Gastrocnemius medialis (tissue), 4 donors: ENCODE measurements at regions of chr19 and their contacts with region 1.

Region 1: DNA sequence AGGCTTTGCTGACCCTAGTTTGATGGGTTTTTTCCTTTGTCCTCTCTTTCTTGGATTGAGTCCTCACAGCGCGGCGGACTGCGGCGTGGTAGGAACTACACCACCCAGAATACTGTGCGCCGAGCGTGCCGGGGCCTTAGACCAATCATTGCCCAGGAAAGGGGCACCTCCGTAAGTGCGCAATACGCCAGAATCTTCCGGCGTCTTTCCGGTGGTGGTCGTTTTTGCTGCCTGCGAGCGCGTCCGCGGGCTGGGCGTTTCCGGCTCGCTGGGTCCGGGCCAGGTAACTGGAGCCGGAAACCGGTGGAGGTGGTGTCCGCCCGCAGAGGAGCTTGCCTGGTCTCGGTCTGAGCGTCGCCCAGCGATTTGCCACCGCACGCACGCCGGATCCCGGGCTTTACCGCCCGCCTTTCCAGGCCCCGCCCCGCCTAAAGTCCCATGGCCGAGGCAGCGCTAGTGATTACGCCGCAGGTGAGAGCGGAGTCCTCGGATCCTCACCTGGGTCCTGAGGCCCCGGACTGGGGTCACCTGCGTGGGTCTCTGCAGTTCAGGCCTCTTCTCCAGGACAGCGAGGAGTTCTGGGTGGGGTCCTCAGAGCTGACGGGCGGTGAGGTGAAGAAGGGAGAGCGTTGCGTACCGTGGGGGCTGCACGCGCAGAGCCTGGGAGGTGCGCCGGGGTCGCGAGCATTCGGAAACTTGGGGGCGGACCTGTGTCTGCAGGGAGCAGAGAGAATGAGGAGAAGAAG is at the start of gene ZNF549:
- DNase-seq: peak; percentile 91 to 94
- ATAC-seq: peak; percentile 99 to 100
- H3K4me3 ChIP-seq: peak within 1 kb of the TSS; percentile 70 to 91 (median 88)
- H3K27ac ChIP-seq: peak within 1 kb of the TSS; percentile 80 to 90 (median 87)
- H3K4me1 ChIP-seq: peaks cover 8 to 13% of the 10 kb centered on the region in 2 donors
- H3K27me3 ChIP-seq: no peaks in the 10 kb centered on the region
- CTCF ChIP-seq: no peak
- POLR2A ChIP-seq: no peak
- total RNA-seq, gene ZNF549: 1.7 to 3.4 (median 2.3) TPM

Region 2: GRCh38 chr19:57477191-57478008 is 49.9 kb before region 1 on chr19 and contains the start of gene ZNF772:
- in situ Hi-C with region 1: no loop called
- intact Hi-C with region 1: loop called (anchors 1 kb)
- DNase-seq: peak; percentile 89 to 91
- ATAC-seq: peak; percentile 100
- H3K4me3 ChIP-seq: peak within 1 kb of the TSS; percentile 79 to 84 (median 81)
- H3K27ac ChIP-seq: peak within 1 kb of the TSS; percentile 79 to 91 (median 86)
- H3K4me1 ChIP-seq: peaks cover 12 to 13% of the 10 kb centered on the region in 2 donors
- H3K27me3 ChIP-seq: no peaks in the 10 kb centered on the region
- CTCF ChIP-seq: peak; percentile 47 to 70 (median 61)
- POLR2A ChIP-seq: peak in 1 of 2 donors; percentile 20
- total RNA-seq, gene ZNF772: 8.3 to 26.7 (median 17.6) TPM

Region 3: DNA sequence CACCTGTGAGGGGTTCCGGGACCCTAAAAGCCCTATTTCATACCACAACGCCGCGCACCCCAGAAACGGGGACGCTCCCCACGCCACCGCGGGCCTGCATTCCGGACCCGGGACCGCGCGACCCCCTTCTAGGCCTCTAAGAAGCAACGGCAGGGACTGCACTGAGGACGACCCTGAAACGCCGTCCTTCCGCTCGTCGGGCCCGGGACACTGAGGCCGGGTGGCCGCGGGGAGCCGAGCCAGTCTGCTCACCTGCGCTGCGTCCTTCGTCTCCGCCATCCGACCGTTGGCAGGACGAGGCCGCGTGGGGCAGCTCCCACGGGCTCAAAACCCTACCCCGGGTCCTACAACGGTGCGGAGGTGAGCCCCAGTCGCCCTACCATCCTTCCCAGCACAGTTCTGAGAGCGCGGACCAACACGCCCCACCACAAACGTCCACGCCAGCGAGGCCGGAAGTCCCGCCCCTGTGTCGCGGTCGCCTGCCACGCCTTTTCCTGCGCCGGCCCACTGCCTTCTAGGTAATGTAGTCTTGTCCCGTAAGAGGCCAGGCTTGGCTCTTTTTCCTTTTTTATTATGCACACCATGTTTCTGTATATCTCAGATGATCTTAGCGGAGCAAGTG is 32.2 kb after region 1 on chr19 and contains the start of gene ZNF550:
- in situ Hi-C with region 1: no loop called
- intact Hi-C with region 1: loop called (anchors 2 kb)
- DNase-seq: peak; percentile 82 to 88
- ATAC-seq: peak; percentile 96 to 98
- H3K4me3 ChIP-seq: peak within 1 kb of the TSS; percentile 82 to 96 (median 90)
- H3K27ac ChIP-seq: peak within 1 kb of the TSS; percentile 69 to 86 (median 74)
- H3K4me1 ChIP-seq: peaks cover 16 to 26% of the 10 kb centered on the region in 2 donors
- H3K27me3 ChIP-seq: no peaks in the 10 kb centered on the region
- CTCF ChIP-seq: no peak
- POLR2A ChIP-seq: peak in 1 of 2 donors; percentile 51
- total RNA-seq, gene ZNF550: 0.87 to 9.1 (median 2.6) TPM

Region 4: DNA sequence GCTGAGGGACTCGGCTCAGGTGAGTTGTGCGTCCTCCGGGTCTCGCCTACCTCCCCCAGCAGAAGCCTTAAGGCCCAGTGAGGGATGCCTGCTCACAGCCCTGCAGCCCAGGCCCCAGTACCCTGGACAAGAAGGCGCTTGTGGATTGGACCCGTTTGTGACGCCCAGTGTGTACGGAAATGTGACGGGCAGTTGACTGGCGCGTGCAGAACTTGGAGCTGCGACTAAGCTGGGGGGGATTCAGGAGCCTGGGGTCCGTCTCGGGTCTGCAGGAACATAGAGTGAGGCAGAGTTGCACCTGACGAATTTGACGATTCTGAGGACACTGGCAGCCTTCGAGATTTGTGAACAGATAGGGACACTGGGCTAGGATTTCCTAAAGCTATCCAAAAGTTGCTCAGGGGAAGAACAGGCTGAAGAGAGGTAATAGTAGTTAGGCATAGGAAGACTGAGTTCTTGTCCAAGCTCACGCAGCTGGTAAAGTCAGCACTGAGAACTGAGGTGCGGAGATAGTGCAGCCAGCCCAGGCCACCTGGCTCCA is 155.0 kb after region 1 on chr19:
- in situ Hi-C with region 1: no loop called
- intact Hi-C with region 1: loop called (anchors 1 kb)
- DNase-seq: no peak
- ATAC-seq: peak; percentile 22 to 27
- H3K4me3 ChIP-seq: peak overlapping the region; percentile 74 to 99 (median 88)
- H3K27ac ChIP-seq: peak overlapping the region; percentile 55 to 82 (median 68)
- H3K4me1 ChIP-seq: peaks cover 10 to 14% of the 10 kb centered on the region in 2 donors
- H3K27me3 ChIP-seq: no peaks in the 10 kb centered on the region
- CTCF ChIP-seq: no peak
- POLR2A ChIP-seq: no peak

Region 5: DNA sequence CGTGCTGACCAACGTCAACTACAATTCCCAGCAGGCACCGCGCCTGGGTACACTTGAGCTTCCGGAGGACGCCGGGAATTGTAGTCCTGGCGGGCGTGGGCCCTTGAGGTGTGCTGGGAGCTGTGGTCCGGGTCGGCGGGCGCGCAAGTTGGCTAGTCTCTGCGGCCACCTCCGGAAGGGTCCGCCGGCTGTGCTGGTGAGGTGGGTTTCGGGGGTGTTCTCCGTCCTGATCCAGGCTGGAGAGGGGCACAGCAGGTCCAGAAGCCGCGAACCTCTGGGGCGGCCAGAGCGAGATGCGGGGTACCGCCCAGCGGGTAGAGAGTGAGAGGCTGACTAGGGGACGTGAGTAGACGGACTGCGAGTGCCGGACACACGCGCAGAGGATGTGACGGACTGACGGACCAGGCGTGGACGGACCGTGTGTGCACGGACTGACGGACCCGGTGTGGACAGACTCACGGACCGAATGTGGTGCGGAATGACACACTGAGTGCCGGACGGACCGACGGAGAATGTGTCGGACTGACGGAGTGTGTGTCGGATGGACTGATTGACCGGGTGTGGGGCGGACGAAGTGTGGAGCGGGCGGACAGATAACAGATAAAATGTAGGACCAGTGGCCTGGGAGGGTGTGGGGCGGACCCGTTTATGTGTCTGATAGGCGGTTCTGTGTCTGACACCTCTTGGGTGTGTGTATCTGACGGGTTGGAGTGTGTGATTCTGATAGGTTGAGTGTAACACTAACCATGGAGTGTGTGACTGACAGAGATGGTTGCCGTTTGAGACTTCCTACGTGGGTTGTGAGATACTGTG is 799.8 kb after region 1 on chr19 and contains the start of gene ZSCAN22:
- in situ Hi-C with region 1: no loop called
- intact Hi-C with region 1: loop called (anchors 5 kb)
- DNase-seq: peak; percentile 95 to 96
- ATAC-seq: peak; percentile 98
- H3K4me3 ChIP-seq: peak within 1 kb of the TSS; percentile 91 to 96 (median 94)
- H3K27ac ChIP-seq: peak within 1 kb of the TSS; percentile 94 to 99 (median 98)
- H3K4me1 ChIP-seq: peaks cover 24 to 29% of the 10 kb centered on the region in 2 donors
- H3K27me3 ChIP-seq: no peaks in the 10 kb centered on the region
- CTCF ChIP-seq: no peak
- POLR2A ChIP-seq: peak; percentile 79 to 81
- total RNA-seq, gene ZSCAN22: 1.1 to 2.4 (median 1.8) TPM